Endothelial cell of umbilical vein (primary cell): ENCODE measurements at regions of chr7 and their contacts with region 1.

Region 1: DNA sequence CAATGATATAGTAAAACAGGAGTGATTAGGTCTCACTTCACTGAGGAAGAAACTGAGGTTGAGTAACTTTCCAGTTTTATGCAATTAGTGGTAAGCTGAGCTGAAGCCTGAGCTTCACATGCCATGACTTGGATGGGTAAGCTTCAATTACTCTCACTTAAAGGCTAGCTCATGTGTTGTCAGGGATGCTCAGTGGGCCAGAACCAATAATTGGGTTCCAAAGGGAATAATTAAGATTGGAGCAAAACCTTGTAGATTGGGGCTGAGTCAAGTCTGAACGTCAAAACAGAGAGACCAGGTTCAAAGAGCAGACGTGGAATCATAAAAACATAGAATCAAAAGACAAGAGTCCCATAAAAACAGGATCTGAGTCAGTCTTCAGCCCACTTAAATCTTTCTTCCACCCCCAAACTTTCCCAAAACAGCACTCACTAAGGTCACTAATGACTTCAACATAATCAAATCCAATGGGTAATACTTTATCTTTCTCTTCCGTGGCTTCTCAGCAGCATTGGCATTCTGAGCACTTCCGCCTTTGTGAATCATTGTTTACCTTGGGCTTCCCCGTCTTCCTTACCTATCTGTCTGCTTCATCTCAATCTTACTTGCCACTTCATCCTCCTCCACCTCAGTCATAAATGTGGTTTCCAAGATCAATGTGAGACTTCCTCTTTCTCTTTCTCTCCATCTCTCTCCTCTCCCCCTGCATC is 23.0 kb upstream of the EGFR start:
- DNase-seq: peak; percentile 80
- H3K4me3 ChIP-seq: no peak overlapping the region
- H3K27ac ChIP-seq: peak overlapping the region; percentile 15
- H3K4me1 ChIP-seq: peaks cover 20% of the 10 kb centered on the region
- H3K27me3 ChIP-seq: peaks cover 4% of the 10 kb centered on the region in 2 experiments
- CTCF ChIP-seq: no peak
- POLR2A ChIP-seq: peak; percentile 52

Region 2: DNA sequence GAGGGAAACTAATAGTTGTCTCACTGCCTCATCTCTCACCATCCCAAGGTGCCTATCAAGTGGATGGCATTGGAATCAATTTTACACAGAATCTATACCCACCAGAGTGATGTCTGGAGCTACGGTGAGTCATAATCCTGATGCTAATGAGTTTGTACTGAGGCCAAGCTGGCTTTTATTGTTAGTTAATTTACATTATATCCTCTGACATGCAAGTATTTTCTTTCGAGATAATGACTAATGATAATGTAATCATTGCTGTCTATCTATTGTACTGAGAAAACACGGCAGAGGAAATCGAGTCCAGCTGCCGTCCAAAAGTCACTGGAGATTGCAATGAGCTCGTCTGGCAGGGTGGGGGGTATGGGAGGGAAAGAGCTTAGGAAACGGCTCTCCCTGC is 196.9 kb after region 1 on chr7:
- CTCF ChIA-PET with region 1: no interaction called
- POLR2A ChIA-PET with region 1: no interaction called
- dilution Hi-C with region 1: no loop called
- intact Hi-C with region 1: loop called (anchors 2 kb)
- DNase-seq: peak; percentile 90
- H3K4me3 ChIP-seq: no peak overlapping the region
- H3K27ac ChIP-seq: peak overlapping the region; percentile 80
- H3K4me1 ChIP-seq: peaks cover 42% of the 10 kb centered on the region
- H3K27me3 ChIP-seq: no peaks in the 10 kb centered on the region
- CTCF ChIP-seq: no peak
- POLR2A ChIP-seq: peak; percentile 45